Gastrocnemius medialis (tissue), 4 donors: ENCODE measurements at regions of chr11 and their contacts with region 1.

Region 1: DNA sequence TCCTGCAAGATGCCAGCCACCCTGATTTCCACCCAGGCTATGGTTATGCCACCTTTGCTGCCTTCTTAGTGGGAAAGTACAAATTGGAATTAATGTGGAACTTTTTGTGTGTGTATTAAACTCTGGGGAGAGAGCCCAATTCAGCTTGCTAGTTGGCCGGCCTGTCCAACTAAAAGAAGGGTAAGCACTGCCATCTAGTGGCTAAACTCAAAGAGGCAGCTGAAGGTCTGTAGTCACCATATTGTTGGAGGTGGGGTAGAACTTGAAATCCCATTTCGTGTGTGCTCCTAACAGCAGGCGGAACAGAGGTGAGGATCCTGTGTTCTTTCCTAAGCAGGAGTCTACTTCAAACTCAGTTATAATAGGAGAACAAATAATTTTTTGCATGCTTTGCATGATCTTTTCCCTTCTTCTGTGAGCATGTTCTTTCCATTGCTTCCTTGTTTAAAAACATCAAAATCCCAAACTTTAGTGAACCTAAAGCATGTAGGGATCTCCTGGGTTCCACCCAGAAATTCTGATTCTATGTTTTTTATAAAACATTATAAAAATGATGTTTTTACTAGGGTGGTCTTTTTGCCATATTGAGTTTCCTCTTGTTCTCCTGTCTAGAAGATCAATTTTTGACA is 138.8 kb upstream of the SORL1-AS1 start:
- DNase-seq: peak; percentile 32 to 33
- ATAC-seq: peak; percentile 78 to 83
- H3K4me3 ChIP-seq: no peak overlapping the region
- H3K27ac ChIP-seq: no peak overlapping the region
- H3K4me1 ChIP-seq: no peaks in the 10 kb centered on the region
- H3K27me3 ChIP-seq: no peaks in the 10 kb centered on the region
- CTCF ChIP-seq: peak; percentile 59 to 82 (median 75)
- POLR2A ChIP-seq: no peak

Region 2: GRCh38 chr11:121249039-121249663 is 342.4 kb before region 1 on chr11:
- in situ Hi-C with region 1: loop called in 2 of 4 experiments (anchors 5 kb)
- intact Hi-C with region 1: loop called (anchors 2 kb)
- DNase-seq: no peak
- ATAC-seq: peak; percentile 65 to 70
- H3K4me3 ChIP-seq: peak overlapping the region in 1 of 4 donors; percentile 27
- H3K27ac ChIP-seq: no peak overlapping the region
- H3K4me1 ChIP-seq: no peaks in the 10 kb centered on the region
- H3K27me3 ChIP-seq: no peaks in the 10 kb centered on the region
- CTCF ChIP-seq: peak; percentile 24 to 76 (median 66)
- POLR2A ChIP-seq: no peak

Region 3: GRCh38 chr11:121318848-121319834 is 272.4 kb before region 1 on chr11:
- in situ Hi-C with region 1: loop called in 3 of 4 experiments (anchors 5 to 10 kb)
- intact Hi-C with region 1: loop called (anchors 1 kb)
- DNase-seq: no peak
- ATAC-seq: peak in 1 of 2 donors; percentile 65
- H3K4me3 ChIP-seq: no peak overlapping the region
- H3K27ac ChIP-seq: no peak overlapping the region
- H3K4me1 ChIP-seq: no peaks in the 10 kb centered on the region
- H3K27me3 ChIP-seq: peaks cover 0 to 3% (median 0%) of the 10 kb centered on the region in 3 donors
- CTCF ChIP-seq: peak; percentile 15 to 56 (median 50)
- POLR2A ChIP-seq: no peak

Region 4: GRCh38 chr11:121464352-121464946 is 127.1 kb before region 1 on chr11:
- in situ Hi-C with region 1: no loop called
- intact Hi-C with region 1: loop called (anchors 10 kb)
- DNase-seq: no peak
- ATAC-seq: peak in 1 of 2 donors; percentile 53
- H3K4me3 ChIP-seq: no peak overlapping the region
- H3K27ac ChIP-seq: no peak overlapping the region
- H3K4me1 ChIP-seq: no peaks in the 10 kb centered on the region
- H3K27me3 ChIP-seq: no peaks in the 10 kb centered on the region
- CTCF ChIP-seq: no peak
- POLR2A ChIP-seq: no peak